Upper lobe of right lung (tissue), 1 donor: ENCODE measurements at regions of chr5 and their contacts with region 1.

Region 1: GRCh38 chr5:54905943-54906537 is 79.4 kb downstream of the ESM1 start:
- DNase-seq: no peak
- ATAC-seq: peak; percentile 42
- H3K4me3 ChIP-seq: no peak overlapping the region
- H3K27ac ChIP-seq: no peak overlapping the region
- H3K4me1 ChIP-seq: no peaks in the 10 kb centered on the region
- H3K27me3 ChIP-seq: no peaks in the 10 kb centered on the region
- CTCF ChIP-seq: peak; percentile 69

Region 2: DNA sequence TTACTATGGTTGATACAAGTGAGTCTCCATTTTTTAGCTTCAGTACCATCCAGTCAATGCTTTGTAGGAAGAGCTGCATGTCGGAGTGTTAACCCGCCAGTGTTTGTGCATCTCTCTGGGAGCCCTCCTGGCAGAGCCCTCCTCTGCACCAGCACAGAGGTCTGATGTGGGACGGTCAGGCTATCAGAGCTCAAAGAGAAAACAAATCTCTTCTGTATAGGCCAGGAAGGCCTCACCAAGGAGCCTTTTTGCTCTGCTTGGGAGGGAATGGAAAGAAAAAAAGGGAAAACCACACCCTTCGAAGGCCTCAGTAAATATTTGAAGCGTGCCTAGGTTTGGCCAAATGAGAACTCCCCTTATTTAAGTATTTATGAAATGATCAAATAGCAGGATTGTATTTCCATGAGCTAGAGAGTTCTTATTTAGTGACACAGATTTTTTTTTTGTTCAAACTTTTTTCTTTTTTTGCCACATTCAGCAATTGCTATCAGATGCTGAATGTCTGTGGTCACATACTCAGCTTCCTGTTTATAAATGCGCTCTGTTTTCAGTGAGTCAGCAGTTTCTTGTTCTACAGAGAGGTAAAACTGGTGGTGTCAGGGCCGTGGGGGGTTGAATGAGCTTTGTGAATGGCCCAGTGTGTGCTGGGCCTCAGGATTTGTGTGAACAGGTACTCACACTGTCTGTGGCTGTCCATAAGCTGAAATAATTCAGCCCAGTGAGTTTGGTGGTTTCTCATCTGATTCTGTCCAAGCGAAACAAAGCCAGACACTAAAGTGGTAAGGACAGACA is 161.8 kb before region 1 on chr5:
- intact Hi-C with region 1: no loop called
- DNase-seq: no peak
- ATAC-seq: peak; percentile 79
- H3K4me3 ChIP-seq: no peak overlapping the region
- H3K27ac ChIP-seq: peak overlapping the region; percentile 24
- H3K4me1 ChIP-seq: peaks cover 26% of the 10 kb centered on the region
- H3K27me3 ChIP-seq: no peaks in the 10 kb centered on the region
- CTCF ChIP-seq: no peak

Region 3: DNA sequence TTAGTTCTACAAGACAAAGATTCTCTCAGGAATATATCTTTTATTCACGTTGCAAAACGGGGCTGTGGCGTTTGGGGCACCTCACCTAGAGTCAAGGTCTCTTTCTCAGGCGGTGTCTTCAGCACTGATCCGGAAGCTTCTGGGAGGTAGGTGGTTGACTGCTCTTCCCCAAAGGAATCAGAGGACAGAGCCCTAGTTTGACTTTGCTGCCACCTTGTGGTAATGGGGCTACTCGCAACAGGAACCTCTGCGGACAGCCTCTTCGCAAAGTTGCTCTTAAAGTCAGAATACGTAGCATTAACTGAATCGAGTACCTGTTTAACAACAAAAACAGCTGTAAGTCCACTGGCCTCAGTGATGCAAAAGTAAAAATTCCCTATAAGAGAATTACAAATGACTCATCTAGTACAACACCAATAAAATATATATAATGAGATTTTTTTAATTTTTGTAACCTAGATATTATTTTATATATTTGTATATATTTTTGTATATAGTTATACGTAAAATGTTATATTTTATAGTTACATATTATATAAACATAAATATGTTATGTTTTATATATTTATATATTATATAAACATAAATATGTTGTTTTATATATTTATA is 240.6 kb after region 1 on chr5:
- intact Hi-C with region 1: loop called (anchors 10 kb)
- DNase-seq: peak; percentile 65
- ATAC-seq: peak; percentile 98
- H3K4me3 ChIP-seq: no peak overlapping the region
- H3K27ac ChIP-seq: no peak overlapping the region
- H3K4me1 ChIP-seq: no peaks in the 10 kb centered on the region
- H3K27me3 ChIP-seq: peaks cover 5% of the 10 kb centered on the region
- CTCF ChIP-seq: peak; percentile 92

Region 4: GRCh38 chr5:55232985-55233928 is 327.2 kb after region 1 on chr5 and contains the start of gene CCNO:
- intact Hi-C with region 1: no loop called
- DNase-seq: peak; percentile 81
- ATAC-seq: peak; percentile 90
- H3K4me3 ChIP-seq: peak within 1 kb of the TSS; percentile 55
- H3K27ac ChIP-seq: no peak within 1 kb of the TSS
- H3K4me1 ChIP-seq: peaks cover 37% of the 10 kb centered on the region
- H3K27me3 ChIP-seq: peaks cover 97% of the 10 kb centered on the region
- CTCF ChIP-seq: peak; percentile 9
- total RNA-seq, gene CCNO: not detected